ENCODE measurements at regions of chr17 and their contacts with region 1.

Region 1: DNA sequence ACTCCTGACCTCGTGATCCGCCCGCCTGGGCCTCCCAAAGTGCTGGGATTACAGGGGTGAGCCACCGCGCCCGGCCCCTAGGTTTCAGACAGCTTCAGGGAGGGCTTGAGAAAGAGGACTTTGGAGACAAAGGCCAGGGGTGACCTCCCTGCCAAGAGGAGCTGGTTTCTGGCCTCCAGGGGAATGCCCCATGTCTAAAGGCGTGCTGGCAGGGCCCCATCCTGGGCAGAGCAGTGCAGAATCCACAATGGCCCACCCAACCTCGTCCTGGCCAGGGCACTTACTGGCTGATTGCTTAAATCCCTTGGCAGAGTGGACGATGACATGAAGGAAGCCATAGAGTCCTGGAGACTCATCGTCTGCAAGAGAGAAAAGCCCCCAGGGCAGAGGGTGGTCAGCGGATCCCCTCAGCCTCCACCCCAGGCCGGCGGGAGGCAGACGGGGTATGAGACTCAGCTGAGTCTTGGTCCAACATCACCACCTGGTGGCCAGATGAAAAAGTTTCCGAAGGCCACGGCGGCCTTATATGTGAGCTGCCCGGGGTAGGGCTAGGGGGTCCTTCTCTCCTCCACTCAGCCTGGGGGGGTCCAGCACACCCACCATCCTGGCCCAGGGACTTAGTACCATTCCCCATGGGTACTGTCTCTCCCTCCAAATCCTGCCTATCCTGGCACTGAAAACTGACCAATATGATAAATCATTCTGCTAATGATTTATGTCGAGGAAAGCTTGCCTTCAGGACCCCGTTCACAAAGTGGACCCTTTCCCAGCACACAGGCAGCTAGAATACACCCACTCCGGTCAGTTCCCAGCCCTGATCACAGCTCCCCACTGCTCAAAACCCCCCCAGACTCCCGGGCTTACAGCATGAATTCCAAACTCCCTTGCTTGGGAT is 59.1 kb downstream of the TIMM22 start:
- DNase-seq: peak; percentile 60
- ATAC-seq: peak; percentile 64
- H3K4me3 ChIP-seq: no peak overlapping the region
- H3K4me3 Mint-ChIP-seq: no peak overlapping the region
- H3K27ac ChIP-seq: no peak overlapping the region
- H3K27ac Mint-ChIP-seq: no peak overlapping the region
- H3K4me1 ChIP-seq: no peaks in the 10 kb centered on the region
- H3K4me1 Mint-ChIP-seq: no peaks in the 10 kb centered on the region
- H3K27me3 ChIP-seq: no peaks in the 10 kb centered on the region
- H3K27me3 Mint-ChIP-seq: no peaks in the 10 kb centered on the region
- CTCF ChIP-seq: peak; percentile 76

Region 2: GRCh38 chr17:879549-880442 is 176.2 kb before region 1 on chr17:
- CTCF ChIA-PET with region 1: interaction called, 6 read pairs
- POLR2A ChIA-PET with region 1: no interaction called
- intact Hi-C with region 1: loop called (anchors 2 kb)
- DNase-seq: peak; percentile 78
- ATAC-seq: peak; percentile 53
- H3K4me3 ChIP-seq: no peak overlapping the region
- H3K4me3 Mint-ChIP-seq: no peak overlapping the region
- H3K27ac ChIP-seq: no peak overlapping the region
- H3K27ac Mint-ChIP-seq: no peak overlapping the region
- H3K4me1 ChIP-seq: no peaks in the 10 kb centered on the region
- H3K4me1 Mint-ChIP-seq: peaks cover 5% of the 10 kb centered on the region
- H3K27me3 ChIP-seq: peaks cover 0 to 6% (median 0%) of the 10 kb centered on the region in 4 experiments
- H3K27me3 Mint-ChIP-seq: peaks cover 27% of the 10 kb centered on the region
- CTCF ChIP-seq: peak; percentile 71

Region 3: DNA sequence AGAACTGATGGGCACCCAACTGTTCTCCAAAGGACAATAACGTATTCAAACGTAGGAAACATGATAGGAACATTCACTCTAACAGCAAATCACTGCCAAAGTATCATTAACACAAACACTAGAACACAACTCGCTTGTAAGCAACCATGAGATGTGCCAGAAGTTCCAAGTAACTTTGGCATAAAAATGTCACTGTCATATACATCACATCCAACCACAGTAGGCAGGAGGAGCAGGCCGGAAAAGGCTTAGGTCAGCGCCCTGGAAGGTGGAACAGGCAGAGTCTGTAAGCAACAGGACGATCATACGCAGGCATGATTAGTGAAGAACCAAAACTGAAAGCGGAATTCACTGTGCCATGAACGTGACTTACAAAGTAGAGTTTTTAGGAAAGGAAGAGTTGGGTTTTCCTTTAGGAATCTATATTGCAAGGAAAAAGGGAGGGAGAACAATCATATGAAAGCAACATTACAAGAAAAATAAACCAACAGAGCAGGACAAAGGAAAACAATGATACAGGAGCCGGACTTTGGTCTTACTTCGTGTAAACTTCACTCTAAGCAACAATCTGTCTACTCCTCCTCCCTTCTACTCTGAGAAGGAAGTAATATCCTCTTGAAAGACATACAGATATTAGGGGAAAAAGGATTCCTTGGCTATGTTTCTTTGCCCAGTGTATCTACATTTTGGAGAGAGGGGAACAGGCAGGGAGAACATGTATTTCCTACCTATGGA is 291.8 kb after region 1 on chr17:
- CTCF ChIA-PET with region 1: no interaction called
- POLR2A ChIA-PET with region 1: no interaction called
- intact Hi-C with region 1: no loop called
- DNase-seq: no peak
- ATAC-seq: no peak
- H3K4me3 ChIP-seq: no peak overlapping the region
- H3K4me3 Mint-ChIP-seq: peak overlapping the region; percentile 27
- H3K27ac ChIP-seq: peak overlapping the region; percentile 25 to 68
- H3K27ac Mint-ChIP-seq: peak overlapping the region; percentile 42
- H3K4me1 ChIP-seq: peaks cover 0 to 7% of the 10 kb centered on the region in 2 donors
- H3K4me1 Mint-ChIP-seq: peaks cover 21% of the 10 kb centered on the region
- H3K27me3 ChIP-seq: no peaks in the 10 kb centered on the region
- H3K27me3 Mint-ChIP-seq: no peaks in the 10 kb centered on the region
- CTCF ChIP-seq: no peak

Measured in B cell (primary cell).